H1 (cell line): ENCODE measurements at regions of chr9 and their contacts with region 1.

Region 1: DNA sequence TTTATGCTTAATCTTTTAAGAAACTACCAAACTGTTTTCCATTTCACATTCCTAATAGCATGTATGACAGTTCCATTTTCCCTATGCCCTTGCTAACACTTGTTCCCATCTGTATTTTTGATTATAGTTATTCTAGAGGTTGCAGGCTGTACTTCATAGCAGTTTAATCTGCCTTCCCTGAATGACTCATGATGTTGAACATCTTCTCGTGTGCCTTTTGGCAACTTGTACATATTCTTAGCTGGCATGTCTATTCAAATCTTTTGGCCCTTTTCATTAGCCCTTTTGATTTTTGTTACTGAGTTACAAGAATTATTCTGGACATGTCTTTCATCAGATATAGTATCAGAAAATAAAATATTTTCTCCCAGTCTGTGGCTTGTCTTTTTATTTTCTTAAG is 320.3 kb downstream of the DIRAS2 start:
- DNase-seq: no peak
- H3K4me3 ChIP-seq: no peak overlapping the region
- H3K27ac ChIP-seq: no peak overlapping the region
- H3K4me1 ChIP-seq: peaks cover 0 to under 1% (median 0%) of the 10 kb centered on the region in 4 experiments; a peak in 1 of 7 replicates
- H3K27me3 ChIP-seq: no peaks in the 10 kb centered on the region
- CTCF ChIP-seq: no peak
- EP300 ChIP-seq: no peak
- POLR2A ChIP-seq: no peak
- RAD21 ChIP-seq: no peak

Region 2: DNA sequence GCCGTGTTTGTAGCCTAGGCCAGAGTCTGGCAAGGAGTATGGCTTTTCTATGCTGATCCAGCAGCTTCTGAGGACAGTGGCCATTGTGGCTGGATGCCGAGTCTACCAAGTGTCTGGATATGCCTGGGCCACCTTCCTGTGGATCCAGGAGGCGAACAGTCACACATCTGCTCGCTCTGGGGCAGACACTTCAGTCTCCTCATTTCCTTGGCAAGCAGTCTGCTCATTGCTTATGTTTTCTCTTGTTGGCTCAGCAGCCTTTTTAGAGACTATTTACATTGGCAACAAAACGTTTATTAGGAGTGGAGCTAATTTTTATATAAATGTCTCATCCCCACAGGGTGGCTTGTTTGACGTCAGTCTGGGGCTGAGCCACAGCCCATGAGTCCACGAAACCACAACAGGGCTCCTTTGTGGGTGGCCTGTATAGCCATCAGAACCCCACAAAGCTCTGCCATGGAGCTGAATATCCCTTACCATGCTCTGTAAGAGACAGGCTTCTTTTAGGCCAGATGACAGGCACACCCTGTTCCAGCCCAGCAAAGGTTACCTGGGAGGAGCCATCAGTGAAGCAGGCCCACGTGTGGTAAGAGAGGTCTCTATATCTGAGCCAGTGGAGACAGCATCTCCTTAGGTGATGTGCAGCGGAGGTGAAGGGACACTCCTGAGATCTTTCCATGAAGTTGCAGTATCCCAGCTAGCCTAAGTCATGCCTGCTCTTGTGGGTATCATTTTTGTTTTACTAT is 98.6 kb after region 1 on chr9:
- CTCF ChIA-PET with region 1: no interaction called
- POLR2A ChIA-PET with region 1: no interaction called
- DNase-seq: no peak
- H3K4me3 ChIP-seq: no peak overlapping the region
- H3K27ac ChIP-seq: no peak overlapping the region
- H3K4me1 ChIP-seq: no peaks in the 10 kb centered on the region; a peak in 1 of 7 replicates
- H3K27me3 ChIP-seq: no peaks in the 10 kb centered on the region
- CTCF ChIP-seq: no peak
- EP300 ChIP-seq: no peak
- POLR2A ChIP-seq: no peak
- RAD21 ChIP-seq: no peak

Region 3: DNA sequence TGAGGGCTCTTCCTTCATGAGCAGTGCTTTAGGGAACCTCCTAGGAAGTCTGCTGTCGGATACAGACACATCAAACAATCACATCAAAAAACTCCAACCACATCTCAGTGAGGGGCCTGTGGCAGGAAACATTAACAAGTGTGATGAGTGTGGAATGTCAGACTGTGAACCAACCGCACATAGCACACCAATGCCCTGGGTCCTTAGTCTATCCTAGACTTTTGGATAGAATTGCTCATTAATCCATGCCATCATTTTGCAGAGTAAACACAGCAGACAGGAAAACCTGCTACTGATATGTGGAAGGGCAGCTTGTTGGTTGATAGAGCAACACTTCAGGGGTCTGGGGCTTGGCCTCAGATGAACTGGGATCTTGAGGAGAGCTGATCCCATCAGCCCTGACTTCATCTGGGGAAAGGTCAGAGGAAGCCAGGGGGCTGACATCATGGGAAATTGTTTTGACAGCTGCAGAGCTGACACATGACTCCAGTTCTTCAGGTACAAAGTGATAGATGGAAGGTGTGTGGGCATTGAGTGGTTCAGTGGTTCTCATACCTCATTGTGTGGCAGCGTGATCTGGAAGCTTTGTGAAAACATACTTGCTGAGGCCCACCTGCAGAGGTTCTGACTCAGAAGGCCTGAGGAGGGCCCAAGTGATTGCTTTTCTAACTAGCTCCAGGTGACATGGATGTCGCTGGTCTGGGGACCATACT is 127.1 kb after region 1 on chr9:
- CTCF ChIA-PET with region 1: no interaction called
- POLR2A ChIA-PET with region 1: no interaction called
- DNase-seq: no peak
- H3K4me3 ChIP-seq: no peak overlapping the region
- H3K27ac ChIP-seq: no peak overlapping the region
- H3K4me1 ChIP-seq: no peaks in the 10 kb centered on the region
- H3K27me3 ChIP-seq: no peaks in the 10 kb centered on the region
- CTCF ChIP-seq: no peak
- EP300 ChIP-seq: no peak
- POLR2A ChIP-seq: no peak
- RAD21 ChIP-seq: no peak

Region 4: DNA sequence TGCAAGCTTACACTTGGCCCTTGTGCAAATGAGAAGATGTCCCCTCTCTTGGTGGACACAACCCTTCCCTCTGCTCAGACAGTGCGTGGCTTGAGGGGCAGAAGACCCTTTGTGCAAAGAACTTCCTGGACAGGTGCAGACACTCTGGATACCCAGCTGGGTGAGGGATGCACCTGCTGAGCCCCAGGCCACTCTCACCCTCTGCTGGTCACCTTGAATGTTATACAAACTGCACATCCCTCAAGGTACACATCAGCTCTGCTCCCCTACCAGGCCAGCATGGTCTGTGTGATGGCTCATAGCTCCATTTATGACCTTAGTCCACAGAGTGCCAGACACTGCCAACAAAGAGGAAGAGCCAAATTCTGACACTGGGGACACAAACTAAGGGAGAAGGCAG is 323.4 kb after region 1 on chr9:
- CTCF ChIA-PET with region 1: interaction called, 11 read pairs
- POLR2A ChIA-PET with region 1: no interaction called
- DNase-seq: no peak
- H3K4me3 ChIP-seq: no peak overlapping the region
- H3K27ac ChIP-seq: no peak overlapping the region
- H3K4me1 ChIP-seq: peaks cover 0 to 3% (median 2%) of the 10 kb centered on the region in 4 experiments; a peak in 1 of 7 replicates
- H3K27me3 ChIP-seq: peaks cover 0 to 9% (median 7%) of the 10 kb centered on the region in 4 experiments; a peak in 4 of 7 replicates
- CTCF ChIP-seq: no peak
- EP300 ChIP-seq: no peak
- POLR2A ChIP-seq: no peak
- RAD21 ChIP-seq: peak; percentile 18 to 31; a peak in 3 of 4 replicates

Region 5: GRCh38 chr9:90665072-90665471 is 342.8 kb after region 1 on chr9:
- CTCF ChIA-PET with region 1: interaction called, 18 read pairs
- POLR2A ChIA-PET with region 1: no interaction called
- DNase-seq: peak; percentile 23 to 65
- H3K4me3 ChIP-seq: no peak overlapping the region
- H3K27ac ChIP-seq: no peak overlapping the region
- H3K4me1 ChIP-seq: no peaks in the 10 kb centered on the region
- H3K27me3 ChIP-seq: no peaks in the 10 kb centered on the region
- CTCF ChIP-seq: peak; percentile 68 to 78 (median 70)
- EP300 ChIP-seq: no peak
- POLR2A ChIP-seq: no peak
- RAD21 ChIP-seq: peak; percentile 83 to 85